ENCODE measurements at regions of chr15 and their contacts with region 1.

Region 1: GRCh38 chr15:92808978-92809879 is 90.9 kb upstream of the CHD2 start:
- DNase-seq: peak; percentile 93 to 97 (median 96)
- H3K4me3 ChIP-seq: peak overlapping the region; percentile 52 to 95 (median 73)
- H3K27ac ChIP-seq: peak overlapping the region; percentile 96 to 100 (median 100)
- H3K27me3 ChIP-seq: no peaks in the 10 kb centered on the region
- CTCF ChIP-seq: peak; percentile 88 to 100 (median 98)

Region 2: DNA sequence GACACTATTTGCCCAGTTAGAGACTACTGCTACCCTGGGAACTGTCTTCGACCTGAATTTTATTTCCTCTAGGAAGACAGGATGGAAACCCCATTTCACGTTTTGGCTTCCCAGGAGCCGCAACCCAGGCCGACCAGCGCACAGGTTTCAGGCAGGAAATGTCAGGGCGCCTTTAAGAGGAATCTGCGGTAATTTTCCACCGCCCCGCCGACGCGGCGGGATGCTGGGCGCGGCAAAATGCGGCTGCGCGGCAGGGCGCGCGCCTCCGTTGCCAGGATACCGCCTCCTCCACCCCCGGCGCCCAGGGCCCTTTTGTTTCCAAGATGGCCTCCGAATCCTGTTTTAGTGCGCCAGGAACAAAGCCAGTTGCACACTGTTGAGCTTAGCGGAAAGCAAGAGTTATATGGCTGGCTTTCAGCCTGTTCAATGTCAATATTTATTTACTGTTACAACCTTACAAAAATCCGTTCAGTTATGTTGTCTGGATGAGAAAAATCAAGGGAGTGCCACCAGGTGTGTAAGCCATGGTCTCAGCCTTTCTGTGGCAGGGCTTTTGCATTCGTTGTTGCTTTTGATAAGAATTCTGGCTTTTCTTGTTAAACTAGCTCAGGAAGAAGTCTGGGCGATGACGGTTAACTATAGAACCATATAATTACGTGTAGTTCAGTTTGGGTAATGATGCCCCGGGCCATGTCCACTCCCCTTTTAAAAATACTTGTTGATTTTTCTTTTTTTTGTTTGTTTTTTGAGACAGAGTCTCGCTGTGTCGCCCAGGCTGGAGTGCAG is 11.2 kb after region 1 on chr15:
- intact Hi-C with region 1: loop called in 1 of 2 experiments (anchors 1 kb)
- DNase-seq: peak; percentile 86 to 95 (median 92)
- H3K4me3 ChIP-seq: peak overlapping the region; percentile 17 to 79 (median 58)
- H3K27ac ChIP-seq: peak overlapping the region; percentile 89 to 100 (median 99)
- H3K27me3 ChIP-seq: no peaks in the 10 kb centered on the region
- CTCF ChIP-seq: peak in 16 of 56 donors; percentile 2 to 30 (median 13)

Region 3: GRCh38 chr15:92868992-92869988 is 60.1 kb after region 1 on chr15:
- intact Hi-C with region 1: no loop called
- DNase-seq: no peak
- H3K4me3 ChIP-seq: no peak overlapping the region
- H3K27ac ChIP-seq: no peak overlapping the region
- H3K27me3 ChIP-seq: no peaks in the 10 kb centered on the region
- CTCF ChIP-seq: no peak

Region 4: GRCh38 chr15:92881802-92882696 is 72.8 kb after region 1 on chr15:
- intact Hi-C with region 1: loop called (anchors 1 kb)
- DNase-seq: peak; percentile 95 to 100 (median 99)
- H3K4me3 ChIP-seq: peak overlapping the region; percentile 33 to 98 (median 89)
- H3K27ac ChIP-seq: peak overlapping the region; percentile 91 to 100 (median 100)
- H3K27me3 ChIP-seq: no peaks in the 10 kb centered on the region
- CTCF ChIP-seq: no peak

Region 5: DNA sequence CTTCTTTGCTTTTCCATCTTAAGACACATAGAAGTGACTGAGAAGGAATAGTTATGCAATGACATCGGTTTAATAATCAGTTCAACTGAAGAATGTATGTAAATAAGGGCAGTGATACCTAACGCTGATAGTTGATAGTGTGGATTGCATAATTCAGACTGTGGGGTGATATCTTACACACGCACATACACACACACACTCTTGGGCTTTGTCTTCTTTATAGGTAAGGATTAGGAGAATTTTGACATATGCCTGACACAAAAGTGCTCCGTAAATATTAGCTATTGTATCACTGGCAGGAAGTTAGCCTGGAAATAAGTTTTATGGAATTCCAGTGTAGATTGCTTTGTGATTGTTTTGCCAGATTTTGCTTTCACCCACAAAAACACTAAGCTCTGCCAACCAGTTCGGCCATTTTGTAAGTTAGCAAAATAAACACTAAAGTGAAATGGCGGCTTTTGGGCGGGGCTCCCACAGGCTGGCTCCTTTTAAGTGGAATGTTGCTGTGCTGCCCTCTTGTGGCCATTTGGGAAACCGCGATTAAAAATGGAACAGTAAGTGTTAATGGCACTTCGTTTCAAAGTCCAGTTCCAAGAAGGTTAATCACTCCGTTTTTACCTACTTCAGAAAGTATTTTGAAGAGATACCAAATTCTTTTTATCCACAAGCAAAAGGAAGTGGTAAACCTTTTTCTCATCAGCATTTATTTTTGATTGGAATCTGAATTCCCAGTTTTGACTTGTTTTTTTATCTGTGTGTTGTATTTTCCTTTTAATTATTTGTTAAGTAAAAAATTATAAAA is 108.6 kb after region 1 on chr15:
- intact Hi-C with region 1: loop called (anchors 1 to 2 kb)
- DNase-seq: peak; percentile 77 to 97 (median 88)
- H3K4me3 ChIP-seq: peak overlapping the region in 45 of 59 donors; percentile 2 to 52 (median 30)
- H3K27ac ChIP-seq: peak overlapping the region; percentile 51 to 100 (median 90)
- H3K27me3 ChIP-seq: no peaks in the 10 kb centered on the region
- CTCF ChIP-seq: peak; percentile 84 to 100 (median 97)

Region 6: DNA sequence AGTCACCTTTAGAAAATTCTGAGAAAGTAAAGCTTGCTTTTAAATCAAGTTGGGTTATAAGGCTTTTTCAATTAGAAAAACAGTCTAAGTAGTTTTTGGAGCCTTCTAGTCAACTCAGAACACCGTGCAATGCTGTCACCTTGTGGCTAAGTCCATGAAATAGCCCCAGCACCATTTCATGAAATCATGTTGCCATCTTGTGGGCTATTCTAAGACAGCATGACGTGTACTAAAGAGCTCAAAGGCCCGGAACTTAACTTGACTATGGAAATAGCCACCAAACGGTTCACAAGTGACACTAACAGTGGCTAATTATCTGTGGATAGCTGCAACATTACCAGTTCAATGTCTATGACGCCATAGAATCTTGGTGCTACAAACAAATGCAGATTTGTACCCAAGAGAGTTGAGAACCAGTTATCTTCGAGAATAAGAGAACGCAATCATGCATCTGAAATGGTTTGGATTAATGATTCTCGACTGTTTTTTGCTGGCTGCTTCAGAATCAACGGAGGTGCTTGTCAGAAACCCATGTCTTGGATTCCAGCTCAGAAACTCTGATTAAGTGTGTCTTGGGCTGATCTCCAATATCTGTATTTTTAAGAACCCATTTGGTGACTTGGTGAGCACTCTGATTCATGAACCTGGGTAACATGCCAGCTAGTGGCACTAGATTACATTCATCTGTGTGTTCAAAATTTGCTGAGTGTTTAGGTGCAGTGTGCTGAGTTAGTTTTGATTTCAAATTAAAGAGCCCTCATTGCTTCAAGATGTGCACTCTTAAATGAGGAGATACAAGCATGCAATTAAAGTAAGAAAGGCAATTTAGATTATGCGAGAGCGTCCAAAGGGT is 1310.9 kb after region 1 on chr15:
- intact Hi-C with region 1: loop called in 1 of 2 experiments (anchors 10 kb)
- DNase-seq: peak in 8 of 10 donors; percentile 20 to 74 (median 49)
- H3K4me3 ChIP-seq: no peak overlapping the region
- H3K27ac ChIP-seq: no peak overlapping the region
- H3K27me3 ChIP-seq: no peaks in the 10 kb centered on the region
- CTCF ChIP-seq: peak; percentile 66 to 99 (median 96)

Measured in dorsolateral prefrontal cortex (tissue), 120 donors.